CD4-positive, alpha-beta memory T cell (primary cell): ENCODE measurements at regions of chr10 and their contacts with region 1.

Region 1: GRCh38 chr10:69451209-69451783 is at the start of gene TSPAN15:
- DNase-seq: peak; percentile 80 to 83 (median 82)
- H3K4me3 ChIP-seq: peak within 1 kb of the TSS in 1 of 2 donors; percentile 73
- H3K4me3 Mint-ChIP-seq: peak within 1 kb of the TSS; percentile 86 to 95 (median 90)
- H3K27ac ChIP-seq: peak within 1 kb of the TSS; percentile 49
- H3K27ac Mint-ChIP-seq: peak within 1 kb of the TSS; percentile 39 to 89 (median 70)
- H3K4me1 ChIP-seq: peaks cover 26% of the 10 kb centered on the region
- H3K4me1 Mint-ChIP-seq: peaks cover 12 to 35% (median 22%) of the 10 kb centered on the region in 4 donors
- H3K27me3 ChIP-seq: no peaks in the 10 kb centered on the region
- H3K27me3 Mint-ChIP-seq: no peaks in the 10 kb centered on the region
- total RNA-seq, gene TSPAN15: 2.4 to 2.8 TPM

Region 2: GRCh38 chr10:69337296-69338132 is 113.8 kb before region 1 on chr10:
- CTCF ChIA-PET with region 1: no interaction called
- POLR2A ChIA-PET with region 1: no interaction called
- intact Hi-C with region 1: no loop called
- DNase-seq: no peak
- H3K4me3 ChIP-seq: no peak overlapping the region
- H3K4me3 Mint-ChIP-seq: peak overlapping the region in 5 of 8 donors; percentile 11 to 57 (median 24)
- H3K27ac ChIP-seq: no peak overlapping the region
- H3K27ac Mint-ChIP-seq: peak overlapping the region in 6 of 7 donors; percentile 42 to 70 (median 58)
- H3K4me1 ChIP-seq: peaks cover 78% of the 10 kb centered on the region
- H3K4me1 Mint-ChIP-seq: peaks cover 47 to 88% (median 71%) of the 10 kb centered on the region in 4 donors
- H3K27me3 ChIP-seq: no peaks in the 10 kb centered on the region
- H3K27me3 Mint-ChIP-seq: no peaks in the 10 kb centered on the region

Region 3: GRCh38 chr10:69425511-69426298 is 25.6 kb before region 1 on chr10:
- CTCF ChIA-PET with region 1: interaction called, 17 read pairs
- POLR2A ChIA-PET with region 1: interaction called, 10 read pairs
- intact Hi-C with region 1: loop called (anchors 2 kb)
- DNase-seq: peak; percentile 73 to 86 (median 82)
- H3K4me3 ChIP-seq: no peak overlapping the region
- H3K4me3 Mint-ChIP-seq: peak overlapping the region in 7 of 8 donors; percentile 2 to 72 (median 47)
- H3K27ac ChIP-seq: peak overlapping the region; percentile 61
- H3K27ac Mint-ChIP-seq: peak overlapping the region; percentile 81 to 95 (median 90)
- H3K4me1 ChIP-seq: peaks cover 56% of the 10 kb centered on the region
- H3K4me1 Mint-ChIP-seq: peaks cover 46 to 71% (median 55%) of the 10 kb centered on the region in 4 donors
- H3K27me3 ChIP-seq: no peaks in the 10 kb centered on the region
- H3K27me3 Mint-ChIP-seq: no peaks in the 10 kb centered on the region

Region 4: GRCh38 chr10:69464801-69465401 is 13.6 kb after region 1 on chr10:
- CTCF ChIA-PET with region 1: interaction called, 21 read pairs
- POLR2A ChIA-PET with region 1: interaction called, 4 read pairs
- intact Hi-C with region 1: no loop called
- DNase-seq: peak in 3 of 5 donors; percentile 7 to 14 (median 10)
- H3K4me3 ChIP-seq: no peak overlapping the region
- H3K4me3 Mint-ChIP-seq: peak overlapping the region in 7 of 8 donors; percentile 4 to 72 (median 51)
- H3K27ac ChIP-seq: peak overlapping the region; percentile 30
- H3K27ac Mint-ChIP-seq: peak overlapping the region; percentile 85 to 92 (median 88)
- H3K4me1 ChIP-seq: peaks cover 52% of the 10 kb centered on the region
- H3K4me1 Mint-ChIP-seq: peaks cover 10 to 68% (median 35%) of the 10 kb centered on the region in 4 donors
- H3K27me3 ChIP-seq: no peaks in the 10 kb centered on the region
- H3K27me3 Mint-ChIP-seq: no peaks in the 10 kb centered on the region

Region 5: GRCh38 chr10:70410608-70411007 is 959.3 kb after region 1 on chr10:
- CTCF ChIA-PET with region 1: no interaction called
- POLR2A ChIA-PET with region 1: no interaction called
- intact Hi-C with region 1: no loop called
- DNase-seq: no peak
- H3K4me3 ChIP-seq: no peak overlapping the region
- H3K4me3 Mint-ChIP-seq: peak overlapping the region in 1 of 8 donors; percentile 9
- H3K27ac ChIP-seq: no peak overlapping the region
- H3K27ac Mint-ChIP-seq: peak overlapping the region in 6 of 7 donors; percentile 5 to 73 (median 20)
- H3K4me1 ChIP-seq: peaks cover 46% of the 10 kb centered on the region
- H3K4me1 Mint-ChIP-seq: peaks cover 52 to 77% (median 65%) of the 10 kb centered on the region in 4 donors
- H3K27me3 ChIP-seq: no peaks in the 10 kb centered on the region
- H3K27me3 Mint-ChIP-seq: no peaks in the 10 kb centered on the region